PC-3 (cell line): ENCODE measurements at regions of chr1 and their contacts with region 1.

Region 1: GRCh38 chr1:67544921-67545320 is 114.7 kb upstream of the SERBP1 start:
- DNase-seq: peak; percentile 80
- ATAC-seq: peak; percentile 98
- H3K4me3 ChIP-seq: no peak overlapping the region
- H3K27ac ChIP-seq: no peak overlapping the region
- H3K4me1 ChIP-seq: peaks cover 28% of the 10 kb centered on the region
- H3K27me3 ChIP-seq: no peaks in the 10 kb centered on the region
- CTCF ChIP-seq: no peak

Region 2: GRCh38 chr1:67664048-67664447 is 119.1 kb after region 1 on chr1:
- CTCF ChIA-PET with region 1: interaction called, 11 read pairs
- POLR2A ChIA-PET with region 1: no interaction called
- intact Hi-C with region 1: no loop called
- DNase-seq: peak; percentile 66
- ATAC-seq: peak; percentile 83
- H3K4me3 ChIP-seq: no peak overlapping the region
- H3K27ac ChIP-seq: no peak overlapping the region
- H3K4me1 ChIP-seq: peaks cover 8% of the 10 kb centered on the region
- H3K27me3 ChIP-seq: no peaks in the 10 kb centered on the region
- CTCF ChIP-seq: no peak